ENCODE measurements at regions of chr15 and their contacts with region 1.

Region 1: GRCh38 chr15:52679232-52680040 is at the start of gene ATOSA:
- DNase-seq: peak; percentile 90
- H3K4me3 Mint-ChIP-seq: peak within 1 kb of the TSS; percentile 100
- H3K27ac Mint-ChIP-seq: peak within 1 kb of the TSS; percentile 95
- H3K4me1 Mint-ChIP-seq: peaks cover 17% of the 10 kb centered on the region
- H3K27me3 Mint-ChIP-seq: no peaks in the 10 kb centered on the region
- CTCF ChIP-seq: no peak
- total RNA-seq, gene ATOSA: 21.8 and 22.2 TPM in 2 replicates

Region 2: GRCh38 chr15:52568601-52569256 is 110.7 kb before region 1 on chr15 and contains the start of gene ARPP19:
- CTCF ChIA-PET with region 1: no interaction called
- intact Hi-C with region 1: loop called (anchors 5 kb)
- DNase-seq: peak; percentile 91
- H3K4me3 Mint-ChIP-seq: peak within 1 kb of the TSS; percentile 65
- H3K27ac Mint-ChIP-seq: peak within 1 kb of the TSS; percentile 92
- H3K4me1 Mint-ChIP-seq: peaks cover 9% of the 10 kb centered on the region
- H3K27me3 Mint-ChIP-seq: no peaks in the 10 kb centered on the region
- CTCF ChIP-seq: no peak
- total RNA-seq, gene ARPP19: 145 and 155 TPM in 2 replicates

Region 3: GRCh38 chr15:52728899-52729298 is 49.5 kb after region 1 on chr15:
- CTCF ChIA-PET with region 1: no interaction called
- intact Hi-C with region 1: loop called (anchors 2 kb)
- DNase-seq: no peak
- H3K4me3 Mint-ChIP-seq: no peak overlapping the region
- H3K27ac Mint-ChIP-seq: no peak overlapping the region
- H3K4me1 Mint-ChIP-seq: peaks cover 11% of the 10 kb centered on the region
- H3K27me3 Mint-ChIP-seq: no peaks in the 10 kb centered on the region
- CTCF ChIP-seq: no peak